ENCODE measurements at regions of chr3 and their contacts with region 1.

Region 1: DNA sequence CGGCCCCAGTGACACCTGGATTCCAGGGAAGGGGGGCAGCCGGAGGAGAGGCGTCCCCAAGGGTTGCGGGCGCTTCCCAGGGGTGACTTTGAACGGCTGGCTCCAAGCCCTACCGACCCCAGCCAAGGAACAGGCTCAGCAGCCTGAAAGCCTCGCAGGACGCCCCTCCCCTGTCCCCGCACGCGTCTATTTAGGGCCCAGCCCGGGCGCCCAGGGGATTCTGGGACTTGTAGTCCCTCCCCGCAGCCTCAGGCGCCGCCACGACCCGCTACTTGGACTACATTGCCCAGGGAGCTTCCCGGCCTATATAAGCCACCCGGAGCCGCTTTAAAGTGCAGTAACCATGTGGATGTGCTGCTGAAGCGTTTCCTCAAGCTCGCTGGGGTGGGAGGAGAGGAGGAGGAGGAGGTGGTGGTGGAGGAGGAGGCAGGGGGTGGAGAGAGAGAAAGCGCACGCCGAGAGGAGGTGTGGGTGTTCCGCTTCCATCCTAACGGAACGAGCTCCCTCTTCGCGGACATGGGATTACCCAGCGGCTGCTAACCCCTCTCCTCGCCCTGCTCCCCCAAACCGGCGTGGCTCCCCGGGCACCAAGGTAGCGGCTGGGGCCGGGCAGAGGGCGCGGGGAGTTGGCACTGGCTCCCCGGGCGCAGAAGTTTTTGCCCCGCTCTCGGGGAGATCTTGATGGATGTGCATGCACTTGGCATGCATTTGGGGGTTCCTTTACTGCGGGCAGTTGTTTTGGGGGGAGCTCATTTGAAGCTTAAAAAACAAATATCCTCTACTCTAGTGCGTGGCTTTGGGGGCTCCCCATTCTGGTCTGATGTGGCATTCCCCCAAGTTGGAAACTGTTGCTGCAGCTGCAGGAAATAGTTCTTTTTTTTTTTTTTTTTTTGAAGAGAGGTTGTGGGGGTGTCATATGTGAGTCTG is at the start of gene ITPR1:
- DNase-seq: peak; percentile 91 to 100 (median 98)

Region 2: DNA sequence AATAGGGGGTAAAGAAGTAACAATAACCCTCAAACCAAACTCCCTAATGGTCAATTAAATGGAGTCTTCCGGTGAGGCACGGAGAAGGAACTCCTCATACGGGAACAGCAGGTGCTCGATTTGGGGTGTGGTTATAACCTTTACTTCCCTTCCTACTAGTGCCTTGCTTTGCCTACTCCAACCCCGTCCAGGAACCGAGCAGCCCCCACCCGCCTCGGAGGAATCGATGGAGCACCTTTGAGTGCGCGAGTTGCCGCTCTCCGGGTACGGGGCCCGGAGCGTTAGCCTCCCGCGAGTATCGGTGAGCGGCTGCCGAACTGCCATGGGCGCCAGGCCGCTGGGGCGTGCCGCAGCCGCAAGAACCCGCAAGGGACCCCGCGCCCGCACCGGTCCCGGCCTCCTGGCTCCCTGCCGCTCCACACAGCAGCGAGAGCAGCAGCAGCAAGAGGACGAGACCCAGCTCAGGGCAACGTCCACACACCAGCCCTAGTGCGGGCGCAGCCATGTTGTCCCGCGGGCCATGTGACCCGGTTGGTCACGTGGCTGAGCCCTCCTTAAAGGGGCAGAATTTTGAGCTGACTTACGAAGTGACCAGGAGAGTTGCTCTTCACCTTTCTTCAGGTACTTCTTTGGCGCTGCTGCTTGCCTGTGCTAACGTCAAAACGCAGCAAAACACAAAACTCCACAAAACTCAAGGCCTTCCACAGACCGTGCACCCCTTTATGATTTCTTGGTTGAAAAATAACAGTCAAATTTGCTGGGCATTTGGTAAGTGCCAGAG is 26.3 kb before region 1 on chr3 and contains the start of gene SUMF1:
- intact Hi-C with region 1: loop called (anchors 2 kb)
- DNase-seq: peak; percentile 81 to 97 (median 88)

Region 3: DNA sequence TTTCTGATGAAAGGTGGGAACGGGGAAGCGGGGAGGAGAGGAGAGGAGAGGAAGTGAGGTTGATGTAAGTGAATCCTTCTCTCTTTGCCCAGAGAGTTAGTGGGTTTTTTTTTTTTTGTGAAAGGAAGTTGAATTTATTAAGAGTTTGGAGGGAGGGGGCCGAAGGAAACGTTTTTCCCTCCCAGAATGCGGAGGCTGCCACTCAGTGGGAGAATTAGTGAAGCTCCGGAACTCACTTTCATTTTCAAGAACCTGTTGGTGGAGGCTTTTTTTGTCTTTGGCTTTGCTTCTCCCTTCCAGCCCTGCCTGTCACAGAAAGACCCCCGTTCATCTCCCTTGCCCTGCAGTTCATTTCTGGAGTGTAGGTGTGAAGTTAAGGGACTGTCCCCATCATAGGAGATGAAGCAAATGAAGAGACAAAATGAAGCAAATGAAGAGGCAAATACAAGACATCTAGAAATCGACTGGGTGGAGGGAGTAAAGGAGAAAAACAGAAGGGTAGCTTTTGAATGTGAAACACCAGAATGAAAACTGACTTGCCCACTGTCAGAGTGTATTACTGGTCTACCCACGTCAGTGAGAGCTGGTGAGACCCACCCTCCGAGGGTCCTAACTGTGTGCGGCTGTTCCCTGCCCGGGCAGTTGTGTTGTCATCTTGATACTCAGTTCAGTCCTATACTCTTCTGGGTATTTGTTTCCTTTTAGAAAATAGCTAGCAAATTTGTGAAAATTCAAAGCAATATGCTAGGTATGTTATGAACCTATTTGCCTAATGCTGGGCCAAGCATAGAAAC is 91.4 kb after region 1 on chr3:
- intact Hi-C with region 1: loop called (anchors 10 kb)
- DNase-seq: no peak

Region 4: DNA sequence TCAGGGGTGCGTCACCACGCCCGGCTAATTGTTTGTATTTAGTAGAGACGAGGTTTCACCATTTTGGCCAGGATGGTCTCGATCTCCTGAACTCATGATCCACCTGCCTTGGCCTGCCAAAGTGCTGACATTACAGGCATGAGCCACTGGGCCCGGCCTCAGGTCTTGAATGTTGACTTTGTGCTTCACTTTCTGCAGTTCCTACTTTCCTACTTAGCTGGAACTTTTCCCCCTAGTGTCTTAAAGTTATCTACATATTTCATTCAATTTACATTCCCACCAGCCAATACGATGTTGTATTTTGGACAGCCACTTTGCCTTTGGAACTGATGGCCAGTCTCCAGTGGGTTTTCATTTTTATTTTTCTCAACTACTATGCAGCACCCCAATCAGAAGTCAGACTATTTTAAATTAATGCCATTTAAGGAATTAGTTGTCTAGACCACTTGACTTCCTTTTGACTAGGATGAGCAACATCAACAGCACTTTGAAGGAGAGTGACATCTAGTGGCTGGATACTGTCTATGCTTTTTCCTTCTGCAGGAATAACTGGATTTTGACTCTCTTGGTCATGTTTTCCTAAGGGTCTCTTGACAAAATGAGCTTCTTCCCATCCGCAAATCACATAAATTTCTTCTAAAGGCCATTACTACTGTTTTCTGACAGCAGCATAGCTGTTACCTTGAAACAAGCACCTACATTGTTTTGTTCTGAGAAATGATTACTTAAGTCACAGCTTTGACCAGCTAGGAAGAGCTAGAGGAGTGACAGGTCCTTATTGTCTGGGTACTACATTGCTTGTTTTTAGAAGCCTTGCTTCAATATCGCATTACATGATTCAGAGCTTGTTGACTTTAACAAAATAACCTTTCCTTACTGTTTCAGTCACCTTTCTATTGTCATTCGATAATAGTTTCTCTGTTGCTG is 140.1 kb after region 1 on chr3:
- intact Hi-C with region 1: loop called (anchors 10 kb)
- DNase-seq: peak in 1 of 10 donors; percentile 80